ENCODE measurements at regions of chr15 and their contacts with region 1.

Region 1: GRCh38 chr15:39448409-39448808 is 132.5 kb upstream of the THBS1 start:
- DNase-seq: no peak
- ATAC-seq: no peak
- H3K4me3 ChIP-seq: no peak overlapping the region
- H3K4me3 Mint-ChIP-seq: no peak overlapping the region
- H3K27ac ChIP-seq: no peak overlapping the region
- H3K27ac Mint-ChIP-seq: no peak overlapping the region
- H3K4me1 ChIP-seq: no peaks in the 10 kb centered on the region
- H3K4me1 Mint-ChIP-seq: no peaks in the 10 kb centered on the region
- H3K27me3 ChIP-seq: peaks cover 0 to 2% of the 10 kb centered on the region in 2 experiments
- H3K27me3 Mint-ChIP-seq: peaks cover 5% of the 10 kb centered on the region
- CTCF ChIP-seq: no peak

Region 2: GRCh38 chr15:39403674-39404117 is 44.7 kb before region 1 on chr15:
- CTCF ChIA-PET with region 1: no interaction called
- POLR2A ChIA-PET with region 1: no interaction called
- intact Hi-C with region 1: loop called in 1 of 2 experiments (anchors 2 kb)
- DNase-seq: no peak
- ATAC-seq: no peak
- H3K4me3 ChIP-seq: no peak overlapping the region
- H3K4me3 Mint-ChIP-seq: no peak overlapping the region
- H3K27ac ChIP-seq: no peak overlapping the region
- H3K27ac Mint-ChIP-seq: no peak overlapping the region
- H3K4me1 ChIP-seq: no peaks in the 10 kb centered on the region
- H3K4me1 Mint-ChIP-seq: no peaks in the 10 kb centered on the region
- H3K27me3 ChIP-seq: no peaks in the 10 kb centered on the region
- H3K27me3 Mint-ChIP-seq: peaks cover 3% of the 10 kb centered on the region
- CTCF ChIP-seq: no peak

Region 3: GRCh38 chr15:39465843-39466749 is 17.7 kb after region 1 on chr15:
- CTCF ChIA-PET with region 1: no interaction called
- POLR2A ChIA-PET with region 1: no interaction called
- intact Hi-C with region 1: no loop called
- DNase-seq: no peak
- ATAC-seq: no peak
- H3K4me3 ChIP-seq: no peak overlapping the region
- H3K4me3 Mint-ChIP-seq: no peak overlapping the region
- H3K27ac ChIP-seq: no peak overlapping the region
- H3K27ac Mint-ChIP-seq: no peak overlapping the region
- H3K4me1 ChIP-seq: no peaks in the 10 kb centered on the region
- H3K4me1 Mint-ChIP-seq: no peaks in the 10 kb centered on the region
- H3K27me3 ChIP-seq: no peaks in the 10 kb centered on the region
- H3K27me3 Mint-ChIP-seq: no peaks in the 10 kb centered on the region
- CTCF ChIP-seq: no peak

Measured in CD8-positive, alpha-beta T cell (primary cell).